Activated naive CD4-positive, alpha-beta T cell treated with anti-CD3 and anti-CD28 coated beads for 36 hours (primary cell): ENCODE measurements at regions of chr2 and their contacts with region 1.

Region 1: DNA sequence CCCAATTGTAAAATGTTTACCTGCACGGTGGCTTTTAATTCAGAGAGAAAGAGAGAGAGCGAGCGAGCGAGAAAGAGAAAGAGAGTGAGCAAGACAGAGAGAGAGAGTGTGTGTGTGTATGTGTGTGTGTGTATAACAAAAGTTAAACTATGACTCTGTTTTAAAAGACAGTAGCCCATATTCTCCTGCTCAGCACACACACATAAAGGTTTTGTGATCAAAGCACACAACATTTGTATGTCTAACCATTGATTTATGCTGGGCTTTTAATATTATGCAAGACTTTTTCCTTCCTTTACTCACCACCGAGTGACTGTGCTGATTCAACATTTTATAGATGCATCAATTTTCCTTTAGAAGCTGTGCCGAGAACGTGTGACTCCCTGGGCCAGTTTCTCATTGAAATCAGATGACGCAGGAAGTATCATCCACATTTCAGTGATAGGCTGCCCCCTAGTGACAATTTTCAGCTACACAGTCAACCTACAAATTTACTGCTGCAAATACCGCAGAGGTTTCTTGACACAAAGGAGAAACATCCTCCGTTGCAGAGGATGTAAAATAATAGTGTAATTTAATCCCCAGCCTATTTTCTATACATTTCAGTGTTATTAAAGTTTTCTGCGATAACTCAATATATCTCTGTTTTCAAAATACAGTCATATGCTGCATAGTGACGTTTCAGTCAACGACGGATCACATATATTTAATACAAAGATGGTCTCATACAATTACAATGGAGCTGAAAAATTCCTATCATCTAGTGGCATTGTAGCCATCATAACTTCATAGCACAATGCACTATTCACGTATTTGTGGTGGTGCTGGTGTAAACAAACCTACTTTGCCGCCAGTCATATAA is 165.9 kb upstream of the TANK start:
- DNase-seq: peak; percentile 89
- H3K4me3 Mint-ChIP-seq: no peak overlapping the region
- H3K27ac Mint-ChIP-seq: no peak overlapping the region
- H3K4me1 Mint-ChIP-seq: peaks cover 7% of the 10 kb centered on the region
- H3K27me3 Mint-ChIP-seq: no peaks in the 10 kb centered on the region

Region 2: GRCh38 chr2:160109936-160110673 is 884.3 kb before region 1 on chr2:
- CTCF ChIA-PET with region 1: interaction called, 38 read pairs
- intact Hi-C with region 1: loop called (anchors 1 kb)
- DNase-seq: peak; percentile 74
- H3K4me3 Mint-ChIP-seq: no peak overlapping the region
- H3K27ac Mint-ChIP-seq: no peak overlapping the region
- H3K4me1 Mint-ChIP-seq: no peaks in the 10 kb centered on the region
- H3K27me3 Mint-ChIP-seq: peaks cover 10% of the 10 kb centered on the region

Region 3: GRCh38 chr2:160252278-160252887 is 742.0 kb before region 1 on chr2:
- CTCF ChIA-PET with region 1: interaction called, 22 read pairs
- intact Hi-C with region 1: loop called (anchors 1 kb)
- DNase-seq: no peak
- H3K4me3 Mint-ChIP-seq: no peak overlapping the region
- H3K27ac Mint-ChIP-seq: no peak overlapping the region
- H3K4me1 Mint-ChIP-seq: no peaks in the 10 kb centered on the region
- H3K27me3 Mint-ChIP-seq: peaks cover 6% of the 10 kb centered on the region

Region 4: DNA sequence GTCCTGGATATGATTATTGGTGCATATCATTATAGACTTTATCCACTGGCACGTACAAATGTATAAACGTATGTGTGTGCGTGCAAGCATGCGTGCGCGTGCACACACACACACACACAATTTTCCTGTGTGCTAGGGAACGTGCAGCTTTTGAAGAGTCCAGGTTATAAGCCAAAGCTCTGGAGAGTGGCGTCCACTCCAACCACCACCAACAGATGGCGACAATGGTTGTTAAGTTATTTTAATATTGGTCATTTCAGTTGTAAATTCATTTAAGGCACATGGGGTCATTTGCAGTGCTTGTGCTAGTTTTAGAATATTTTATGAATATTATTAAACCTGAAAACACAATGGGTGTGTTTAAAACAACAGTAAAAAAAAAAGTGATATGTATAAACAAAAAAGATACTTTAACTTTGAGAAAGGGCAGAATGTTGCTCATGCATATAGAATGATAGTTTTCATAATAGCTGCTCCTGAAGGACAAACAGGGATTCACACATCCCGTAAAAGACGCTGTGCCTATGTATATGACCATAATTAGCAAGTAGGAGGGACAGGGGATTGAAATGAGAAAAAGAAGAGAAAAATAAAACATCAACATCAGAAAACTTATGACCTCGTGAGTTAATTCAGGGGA is 670.1 kb before region 1 on chr2:
- CTCF ChIA-PET with region 1: interaction called, 21 read pairs
- intact Hi-C with region 1: loop called (anchors 1 kb)
- DNase-seq: peak; percentile 69
- H3K4me3 Mint-ChIP-seq: no peak overlapping the region
- H3K27ac Mint-ChIP-seq: no peak overlapping the region
- H3K4me1 Mint-ChIP-seq: peaks cover 78% of the 10 kb centered on the region
- H3K27me3 Mint-ChIP-seq: no peaks in the 10 kb centered on the region

Region 5: GRCh38 chr2:160429248-160430000 is 564.9 kb before region 1 on chr2:
- CTCF ChIA-PET with region 1: no interaction called
- intact Hi-C with region 1: loop called (anchors 1 kb)
- DNase-seq: no peak
- H3K4me3 Mint-ChIP-seq: peak overlapping the region; percentile 47
- H3K27ac Mint-ChIP-seq: peak overlapping the region; percentile 88
- H3K4me1 Mint-ChIP-seq: peaks cover 49% of the 10 kb centered on the region
- H3K27me3 Mint-ChIP-seq: no peaks in the 10 kb centered on the region

Region 6: DNA sequence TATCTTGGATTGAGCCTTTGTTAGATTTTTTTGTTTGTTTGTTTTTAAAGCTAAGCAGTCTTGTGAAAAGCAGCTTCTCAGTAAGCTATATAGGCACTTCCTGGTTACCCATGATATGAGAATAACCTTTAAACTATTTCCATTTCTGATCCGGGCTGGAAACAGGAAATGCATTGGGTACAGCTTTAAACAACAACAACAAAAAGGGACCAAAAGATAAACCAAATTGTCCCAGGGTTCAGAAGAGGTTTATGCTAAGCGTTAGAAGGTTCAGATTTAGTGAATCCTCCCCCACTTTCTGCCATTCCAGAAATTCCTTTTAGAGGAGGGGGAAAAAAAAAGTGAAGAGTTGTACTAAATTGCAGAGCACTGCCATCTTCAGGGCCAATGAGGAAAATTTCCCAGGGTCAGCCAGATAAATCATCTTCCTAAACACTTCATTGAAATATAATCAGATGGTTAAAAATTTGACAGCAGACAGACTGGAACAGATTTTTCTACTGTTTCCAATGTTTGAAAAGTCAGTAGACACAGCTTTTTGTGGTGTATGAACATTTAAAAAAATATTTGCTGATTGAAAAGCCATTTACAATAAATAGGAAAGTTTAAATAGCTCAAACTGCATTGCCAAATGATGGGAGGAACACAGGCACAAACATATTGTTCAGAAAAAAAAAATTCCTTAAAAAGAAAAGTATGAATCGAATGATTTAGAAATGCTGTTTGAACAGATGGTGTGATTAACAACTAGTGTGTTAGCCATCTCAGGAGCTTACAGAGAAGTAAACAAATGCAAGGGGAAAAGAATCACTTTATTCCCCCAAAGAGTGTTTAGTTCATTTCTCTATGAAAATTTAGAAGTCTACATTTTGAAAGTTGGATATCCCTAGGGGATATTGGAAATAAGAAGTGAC is 24.1 kb before region 1 on chr2:
- CTCF ChIA-PET with region 1: interaction called, 8 read pairs
- intact Hi-C with region 1: loop called (anchors 1 kb)
- DNase-seq: peak; percentile 29
- H3K4me3 Mint-ChIP-seq: no peak overlapping the region
- H3K27ac Mint-ChIP-seq: no peak overlapping the region
- H3K4me1 Mint-ChIP-seq: peaks cover 8% of the 10 kb centered on the region
- H3K27me3 Mint-ChIP-seq: no peaks in the 10 kb centered on the region

Region 7: DNA sequence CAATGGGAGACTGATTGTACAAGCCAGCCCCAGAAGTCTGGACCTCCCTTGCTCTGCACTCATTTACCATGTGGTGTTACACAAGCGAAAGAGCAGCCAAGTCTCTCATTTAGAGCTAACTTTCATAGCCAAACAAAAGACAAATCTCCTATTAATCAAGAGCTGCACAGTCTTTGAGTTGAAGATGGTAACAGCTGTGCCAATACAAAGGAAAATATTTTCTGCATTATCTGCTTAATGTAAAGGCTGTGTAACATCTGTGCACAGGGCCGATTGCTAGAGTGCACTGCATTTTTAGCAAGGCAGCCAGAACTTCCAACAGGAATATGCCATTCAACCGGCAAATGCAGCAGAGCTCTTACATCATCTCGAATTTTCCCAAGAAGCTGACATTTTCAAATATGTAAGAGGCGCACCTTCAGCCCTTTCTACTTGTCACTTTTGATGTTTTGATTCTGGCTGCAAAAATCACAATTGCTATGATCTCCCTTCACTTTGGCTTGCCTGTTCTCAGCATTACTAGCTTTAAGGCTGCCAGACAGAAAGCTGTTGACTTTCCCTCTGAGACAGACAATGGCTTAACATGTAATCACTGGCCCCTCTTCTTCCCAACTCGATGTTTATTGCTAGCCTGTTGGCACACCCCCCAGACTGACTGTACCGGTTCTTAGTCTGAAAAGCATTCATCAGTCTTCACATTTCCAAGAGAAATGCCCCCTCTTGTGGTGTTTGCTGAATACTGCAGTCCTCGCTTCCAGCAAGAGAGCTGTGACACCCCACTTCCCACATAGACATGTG is 69.0 kb after region 1 on chr2:
- CTCF ChIA-PET with region 1: interaction called, 29 read pairs
- intact Hi-C with region 1: loop called (anchors 2 kb)
- DNase-seq: peak; percentile 81
- H3K4me3 Mint-ChIP-seq: no peak overlapping the region
- H3K27ac Mint-ChIP-seq: no peak overlapping the region
- H3K4me1 Mint-ChIP-seq: peaks cover 9% of the 10 kb centered on the region
- H3K27me3 Mint-ChIP-seq: peaks cover 5% of the 10 kb centered on the region

Region 8: DNA sequence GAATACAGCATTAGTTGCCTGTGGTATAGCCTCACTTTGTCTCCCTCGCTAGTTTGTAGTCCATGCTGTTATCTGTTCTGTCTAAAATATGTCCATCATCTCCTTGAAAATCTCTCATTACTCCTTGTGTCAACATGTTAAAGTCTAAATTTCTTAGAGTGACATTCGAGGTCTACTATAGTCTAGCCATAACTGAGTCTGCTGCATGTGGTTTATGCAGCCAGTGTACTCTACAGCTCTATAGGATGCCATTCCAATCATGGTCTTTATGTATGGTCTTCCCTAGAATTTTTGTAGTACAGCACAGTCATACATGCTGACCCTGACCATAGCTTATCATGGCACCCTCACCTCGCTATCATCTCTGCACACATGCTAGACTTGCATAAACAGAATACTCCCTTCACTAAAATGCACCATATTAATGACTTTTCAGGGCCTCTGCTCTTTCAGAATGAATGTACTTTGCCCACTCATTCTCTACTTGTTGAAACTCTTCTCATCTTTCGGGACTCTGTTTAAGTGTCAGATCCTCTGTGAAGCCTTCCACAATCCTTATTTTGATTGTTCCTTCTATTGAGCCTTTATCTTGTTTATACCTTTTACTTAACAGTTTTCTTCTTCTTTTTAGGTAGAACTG is 178.6 kb after region 1 on chr2:
- CTCF ChIA-PET with region 1: no interaction called
- intact Hi-C with region 1: no loop called
- DNase-seq: peak; percentile 11
- H3K4me3 Mint-ChIP-seq: no peak overlapping the region
- H3K27ac Mint-ChIP-seq: no peak overlapping the region
- H3K4me1 Mint-ChIP-seq: peaks cover 63% of the 10 kb centered on the region
- H3K27me3 Mint-ChIP-seq: no peaks in the 10 kb centered on the region

Region 9: GRCh38 chr2:161370981-161371380 is 376.6 kb after region 1 on chr2:
- CTCF ChIA-PET with region 1: no interaction called
- intact Hi-C with region 1: no loop called
- DNase-seq: no peak
- H3K4me3 Mint-ChIP-seq: no peak overlapping the region
- H3K27ac Mint-ChIP-seq: no peak overlapping the region
- H3K4me1 Mint-ChIP-seq: no peaks in the 10 kb centered on the region
- H3K27me3 Mint-ChIP-seq: no peaks in the 10 kb centered on the region